Activated CD8-positive, alpha-beta T cell treated with anti-CD3 and anti-CD28 coated beads for 36 hours (primary cell): ENCODE measurements at regions of chr19 and their contacts with region 1.

Region 1: GRCh38 chr19:10677751-10678150 is 23.5 kb upstream of the QTRT1 start:
- DNase-seq: no peak
- ATAC-seq: no peak
- H3K4me3 Mint-ChIP-seq: no peak overlapping the region
- H3K27ac Mint-ChIP-seq: no peak overlapping the region
- H3K4me1 Mint-ChIP-seq: no peaks in the 10 kb centered on the region
- H3K27me3 Mint-ChIP-seq: no peaks in the 10 kb centered on the region
- CTCF ChIP-seq: no peak

Region 2: GRCh38 chr19:10662384-10663251 is 15.1 kb before region 1 on chr19:
- CTCF ChIA-PET with region 1: interaction called, 4 read pairs
- POLR2A ChIA-PET with region 1: interaction called, 13 read pairs
- intact Hi-C with region 1: no loop called
- DNase-seq: peak; percentile 68
- ATAC-seq: peak; percentile 71
- H3K4me3 Mint-ChIP-seq: peak overlapping the region; percentile 21
- H3K27ac Mint-ChIP-seq: peak overlapping the region; percentile 74
- H3K4me1 Mint-ChIP-seq: peaks cover 53% of the 10 kb centered on the region
- H3K27me3 Mint-ChIP-seq: no peaks in the 10 kb centered on the region
- CTCF ChIP-seq: no peak